Caco-2 (cell line): ENCODE measurements at regions of chr9 and their contacts with region 1.

Region 1: GRCh38 chr9:38641985-38642864 is 21.8 kb upstream of the ANKRD18A start:
- DNase-seq: peak; percentile 45 to 50
- H3K4me3 ChIP-seq: no peak overlapping the region
- H3K4me3 Mint-ChIP-seq: no peak overlapping the region
- H3K27ac Mint-ChIP-seq: no peak overlapping the region
- H3K4me1 ChIP-seq: no peaks in the 10 kb centered on the region
- H3K4me1 Mint-ChIP-seq: peaks cover 4% of the 10 kb centered on the region
- H3K27me3 ChIP-seq: no peaks in the 10 kb centered on the region
- H3K27me3 Mint-ChIP-seq: peaks cover 10% of the 10 kb centered on the region
- CTCF ChIP-seq: peak; percentile 54 to 59

Region 2: DNA sequence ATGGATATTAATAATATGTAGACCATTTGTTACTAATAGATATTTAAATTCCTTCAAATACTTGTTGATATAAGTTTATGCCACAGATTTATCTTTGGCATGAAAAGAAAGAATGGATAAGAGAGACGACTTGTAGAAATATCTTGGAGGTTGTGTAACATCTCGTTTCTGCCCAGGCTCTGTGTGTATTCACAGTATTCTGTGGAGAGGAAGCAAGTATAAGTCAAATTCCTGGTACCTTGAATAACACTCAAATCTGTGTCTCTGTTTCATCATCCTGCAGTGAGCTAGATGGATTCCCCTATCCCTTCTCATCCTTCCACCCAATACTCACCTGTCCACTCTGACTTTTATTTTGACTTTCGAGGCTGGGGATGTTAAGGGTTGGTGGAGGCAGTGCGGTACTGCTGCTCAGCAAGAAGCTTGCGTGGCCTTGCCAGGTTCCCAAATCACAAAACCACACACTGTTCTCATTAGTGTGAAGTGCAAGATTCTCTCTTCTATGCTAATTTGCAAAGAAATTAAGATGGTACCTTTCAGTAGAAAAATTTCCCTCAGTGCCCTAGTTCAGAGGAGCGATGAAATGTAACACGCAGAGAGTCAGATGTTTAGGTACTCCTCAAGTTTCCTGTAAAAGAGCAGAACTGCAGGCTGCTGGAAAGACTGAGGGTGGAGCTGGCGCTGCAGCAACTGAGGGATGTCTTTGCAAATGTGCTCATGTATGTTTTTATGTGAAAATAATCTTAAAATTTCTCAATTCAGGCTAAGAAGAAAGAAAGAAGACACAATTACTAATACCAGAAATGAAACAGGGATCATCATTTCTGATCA is 20.8 kb after region 1 on chr9:
- CTCF ChIA-PET with region 1: no interaction called
- POLR2A ChIA-PET with region 1: no interaction called
- intact Hi-C with region 1: loop called (anchors 1 kb)
- DNase-seq: no peak
- H3K4me3 ChIP-seq: no peak overlapping the region
- H3K4me3 Mint-ChIP-seq: no peak overlapping the region
- H3K27ac Mint-ChIP-seq: no peak overlapping the region
- H3K4me1 ChIP-seq: no peaks in the 10 kb centered on the region
- H3K4me1 Mint-ChIP-seq: no peaks in the 10 kb centered on the region
- H3K27me3 ChIP-seq: no peaks in the 10 kb centered on the region
- H3K27me3 Mint-ChIP-seq: peaks cover 13% of the 10 kb centered on the region
- CTCF ChIP-seq: peak in 1 of 2 experiments; percentile 25

Region 3: GRCh38 chr9:38700695-38701094 is 58.5 kb after region 1 on chr9:
- CTCF ChIA-PET with region 1: no interaction called
- POLR2A ChIA-PET with region 1: no interaction called
- intact Hi-C with region 1: no loop called
- DNase-seq: no peak
- H3K4me3 ChIP-seq: no peak overlapping the region
- H3K4me3 Mint-ChIP-seq: no peak overlapping the region
- H3K27ac Mint-ChIP-seq: no peak overlapping the region
- H3K4me1 ChIP-seq: no peaks in the 10 kb centered on the region
- H3K4me1 Mint-ChIP-seq: no peaks in the 10 kb centered on the region
- H3K27me3 ChIP-seq: no peaks in the 10 kb centered on the region
- H3K27me3 Mint-ChIP-seq: peaks cover 8% of the 10 kb centered on the region
- CTCF ChIP-seq: no peak

Region 4: GRCh38 chr9:38713426-38713825 is 71.2 kb after region 1 on chr9:
- CTCF ChIA-PET with region 1: no interaction called
- POLR2A ChIA-PET with region 1: no interaction called
- intact Hi-C with region 1: loop called (anchors 5 kb)
- DNase-seq: no peak
- H3K4me3 ChIP-seq: no peak overlapping the region
- H3K4me3 Mint-ChIP-seq: no peak overlapping the region
- H3K27ac Mint-ChIP-seq: no peak overlapping the region
- H3K4me1 ChIP-seq: no peaks in the 10 kb centered on the region
- H3K4me1 Mint-ChIP-seq: no peaks in the 10 kb centered on the region
- H3K27me3 ChIP-seq: no peaks in the 10 kb centered on the region
- H3K27me3 Mint-ChIP-seq: peaks cover 4% of the 10 kb centered on the region
- CTCF ChIP-seq: no peak